Mammary epithelial cell (primary cell): ENCODE measurements at regions of chr9 and their contacts with region 1.

Region 1: DNA sequence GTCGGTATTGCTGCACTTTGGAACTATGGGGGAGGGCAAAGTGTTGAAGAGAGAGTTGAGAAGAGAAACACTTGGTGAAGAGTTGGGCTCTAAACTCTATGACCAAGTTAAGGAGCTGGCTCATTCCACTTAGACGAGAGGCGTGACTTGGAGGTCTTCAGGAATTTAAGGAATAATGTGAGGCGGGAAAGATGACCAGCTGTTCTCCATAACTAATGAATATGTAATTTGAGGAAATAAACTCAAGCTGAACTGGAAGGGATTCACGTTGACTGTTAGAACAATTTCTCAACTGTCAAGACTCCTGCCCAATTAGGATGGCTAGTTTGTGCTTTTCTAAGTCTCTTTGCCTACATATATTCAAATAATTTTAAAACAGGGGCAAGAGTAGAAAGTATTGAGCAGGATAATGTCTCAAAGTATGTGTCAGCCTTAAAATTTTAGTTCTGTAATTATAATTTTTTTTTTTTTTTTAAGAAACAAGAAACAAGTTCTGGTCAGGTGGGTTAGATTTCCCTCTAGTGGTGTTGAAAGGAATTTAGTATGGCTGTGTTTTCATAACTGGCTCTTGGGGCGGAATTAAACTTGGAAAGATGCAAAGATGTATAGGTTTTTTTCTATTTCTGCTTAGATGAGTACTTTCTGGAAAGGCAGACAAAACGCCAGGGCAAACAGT is 33.4 kb downstream of the TMEM252 start:
- DNase-seq: peak; percentile 6
- H3K4me3 ChIP-seq: no peak overlapping the region
- H3K27ac ChIP-seq: no peak overlapping the region
- H3K4me1 ChIP-seq: no peaks in the 10 kb centered on the region
- H3K27me3 ChIP-seq: no peaks in the 10 kb centered on the region
- CTCF ChIP-seq: peak; percentile 39 to 62

Region 2: DNA sequence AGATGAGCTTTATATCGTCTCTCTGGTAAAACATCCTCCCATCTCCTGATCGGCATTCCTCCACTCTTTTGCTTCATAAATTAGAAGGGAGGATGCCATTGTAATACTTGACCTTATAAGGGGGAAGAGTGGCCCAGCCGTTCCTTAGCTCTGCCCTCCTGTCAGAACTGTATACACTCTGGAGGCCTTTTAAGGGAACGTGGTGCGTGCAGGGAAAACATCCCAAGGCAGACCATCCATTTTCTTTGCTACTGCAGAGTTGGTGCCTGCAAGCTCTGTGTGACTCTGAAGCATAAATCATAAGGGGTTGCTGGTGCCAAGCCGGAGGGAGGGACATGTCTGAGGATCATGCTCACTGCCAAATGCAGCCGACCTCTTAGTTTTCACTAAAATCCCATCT is 60.4 kb before region 1 on chr9:
- CTCF ChIA-PET with region 1: no interaction called
- dilution Hi-C with region 1: no loop called
- in situ Hi-C with region 1: loop called in 1 of 2 experiments (anchors 10 kb)
- intact Hi-C with region 1: no loop called
- DNase-seq: no peak
- H3K4me3 ChIP-seq: no peak overlapping the region
- H3K27ac ChIP-seq: no peak overlapping the region
- H3K4me1 ChIP-seq: no peaks in the 10 kb centered on the region
- H3K27me3 ChIP-seq: no peaks in the 10 kb centered on the region
- CTCF ChIP-seq: no peak

Region 3: GRCh38 chr9:68530618-68531017 is 23.4 kb after region 1 on chr9:
- CTCF ChIA-PET with region 1: no interaction called
- dilution Hi-C with region 1: no loop called
- in situ Hi-C with region 1: no loop called
- intact Hi-C with region 1: no loop called
- DNase-seq: no peak
- H3K4me3 ChIP-seq: no peak overlapping the region
- H3K27ac ChIP-seq: no peak overlapping the region
- H3K4me1 ChIP-seq: no peaks in the 10 kb centered on the region
- H3K27me3 ChIP-seq: no peaks in the 10 kb centered on the region
- CTCF ChIP-seq: no peak

Region 4: GRCh38 chr9:68619636-68620035 is 112.4 kb after region 1 on chr9:
- CTCF ChIA-PET with region 1: no interaction called
- dilution Hi-C with region 1: no loop called
- in situ Hi-C with region 1: loop called in 1 of 2 experiments (anchors 25 kb)
- intact Hi-C with region 1: no loop called
- DNase-seq: no peak
- H3K4me3 ChIP-seq: no peak overlapping the region
- H3K27ac ChIP-seq: no peak overlapping the region
- H3K4me1 ChIP-seq: no peaks in the 10 kb centered on the region
- H3K27me3 ChIP-seq: no peaks in the 10 kb centered on the region
- CTCF ChIP-seq: no peak

Region 5: DNA sequence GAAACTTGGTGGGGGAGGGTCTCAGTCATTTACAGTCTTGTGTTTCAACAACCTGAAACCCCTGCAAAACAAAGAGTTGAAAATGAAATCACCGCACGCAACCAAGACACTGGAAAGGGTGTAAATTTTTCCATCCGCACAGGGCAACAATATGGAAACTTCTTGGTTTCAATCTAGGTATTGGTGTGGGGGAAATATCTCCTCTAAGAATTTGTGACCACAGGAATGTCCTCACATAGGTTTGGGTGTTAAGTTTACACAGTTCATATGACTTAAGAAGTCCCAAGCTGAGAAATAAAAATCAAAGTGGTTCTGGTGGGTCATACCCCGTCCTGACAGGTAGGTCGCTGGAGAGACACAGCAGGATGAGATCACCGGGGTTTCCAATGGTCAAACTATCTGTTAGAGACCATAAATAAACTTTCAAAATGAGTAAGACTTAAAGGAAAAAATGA is 145.9 kb after region 1 on chr9:
- CTCF ChIA-PET with region 1: no interaction called
- dilution Hi-C with region 1: no loop called
- in situ Hi-C with region 1: no loop called
- intact Hi-C with region 1: no loop called
- DNase-seq: no peak
- H3K4me3 ChIP-seq: no peak overlapping the region
- H3K27ac ChIP-seq: no peak overlapping the region
- H3K4me1 ChIP-seq: no peaks in the 10 kb centered on the region
- H3K27me3 ChIP-seq: no peaks in the 10 kb centered on the region
- CTCF ChIP-seq: no peak